Motor neuron (in vitro differentiated cells): ENCODE measurements at regions of chr13 and their contacts with region 1.

Region 1: GRCh38 chr13:93227878-93228642 is 1.5 kb downstream of the GPC6 start:
- ATAC-seq: peak; percentile 66 to 88 (median 78)
- H3K4me3 ChIP-seq: peak overlapping the region; percentile 72 to 97 (median 80)
- H3K27ac ChIP-seq: peak overlapping the region; percentile 65 to 90
- H3K4me1 ChIP-seq: peaks cover 31 to 39% of the 10 kb centered on the region in 2 donors

Region 2: GRCh38 chr13:93900731-93901130 is 672.7 kb after region 1 on chr13:
- in situ Hi-C with region 1: no loop called
- ATAC-seq: no peak
- H3K4me3 ChIP-seq: no peak overlapping the region
- H3K27ac ChIP-seq: no peak overlapping the region
- H3K4me1 ChIP-seq: peaks cover 0 to 4% of the 10 kb centered on the region in 2 donors

Region 3: GRCh38 chr13:94345374-94346195 is 1117.5 kb after region 1 on chr13:
- in situ Hi-C with region 1: loop called in 4 of 9 experiments (anchors 25 kb)
- ATAC-seq: peak in 4 of 8 experiments; percentile 63 to 90 (median 75)
- H3K4me3 ChIP-seq: no peak overlapping the region
- H3K27ac ChIP-seq: no peak overlapping the region
- H3K4me1 ChIP-seq: peaks cover 5% of the 10 kb centered on the region in 2 donors

Region 4: DNA sequence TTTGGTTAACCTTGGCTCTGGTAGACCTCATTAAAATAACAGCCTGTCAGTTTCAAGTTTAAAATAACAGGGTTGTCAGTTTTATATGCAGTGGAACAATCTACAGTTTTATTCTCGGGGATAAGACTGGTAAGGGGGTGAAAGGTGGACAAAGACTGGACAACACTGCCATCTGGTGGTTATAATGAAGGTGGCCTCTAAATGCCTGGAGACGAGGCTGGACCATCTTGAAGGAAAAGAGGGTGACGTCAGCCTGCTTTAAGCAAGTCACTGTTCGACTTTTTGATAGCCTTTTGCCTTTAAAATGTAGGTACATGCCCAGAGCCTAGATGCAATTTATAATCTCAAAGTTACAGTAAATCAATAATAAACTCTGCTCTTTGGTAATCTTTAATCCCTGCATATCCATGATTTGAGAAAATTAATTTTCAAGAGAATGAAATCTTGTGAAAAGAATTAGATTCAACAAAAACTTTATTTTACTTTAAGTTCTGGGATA is 1134.4 kb after region 1 on chr13:
- in situ Hi-C with region 1: loop called in 3 of 9 experiments (anchors 25 kb)
- ATAC-seq: peak; percentile 91 to 100 (median 98)
- H3K4me3 ChIP-seq: no peak overlapping the region
- H3K27ac ChIP-seq: no peak overlapping the region
- H3K4me1 ChIP-seq: peaks cover 0 to 14% of the 10 kb centered on the region in 2 donors